ENCODE measurements at regions of chr11 and their contacts with region 1.

Region 1: DNA sequence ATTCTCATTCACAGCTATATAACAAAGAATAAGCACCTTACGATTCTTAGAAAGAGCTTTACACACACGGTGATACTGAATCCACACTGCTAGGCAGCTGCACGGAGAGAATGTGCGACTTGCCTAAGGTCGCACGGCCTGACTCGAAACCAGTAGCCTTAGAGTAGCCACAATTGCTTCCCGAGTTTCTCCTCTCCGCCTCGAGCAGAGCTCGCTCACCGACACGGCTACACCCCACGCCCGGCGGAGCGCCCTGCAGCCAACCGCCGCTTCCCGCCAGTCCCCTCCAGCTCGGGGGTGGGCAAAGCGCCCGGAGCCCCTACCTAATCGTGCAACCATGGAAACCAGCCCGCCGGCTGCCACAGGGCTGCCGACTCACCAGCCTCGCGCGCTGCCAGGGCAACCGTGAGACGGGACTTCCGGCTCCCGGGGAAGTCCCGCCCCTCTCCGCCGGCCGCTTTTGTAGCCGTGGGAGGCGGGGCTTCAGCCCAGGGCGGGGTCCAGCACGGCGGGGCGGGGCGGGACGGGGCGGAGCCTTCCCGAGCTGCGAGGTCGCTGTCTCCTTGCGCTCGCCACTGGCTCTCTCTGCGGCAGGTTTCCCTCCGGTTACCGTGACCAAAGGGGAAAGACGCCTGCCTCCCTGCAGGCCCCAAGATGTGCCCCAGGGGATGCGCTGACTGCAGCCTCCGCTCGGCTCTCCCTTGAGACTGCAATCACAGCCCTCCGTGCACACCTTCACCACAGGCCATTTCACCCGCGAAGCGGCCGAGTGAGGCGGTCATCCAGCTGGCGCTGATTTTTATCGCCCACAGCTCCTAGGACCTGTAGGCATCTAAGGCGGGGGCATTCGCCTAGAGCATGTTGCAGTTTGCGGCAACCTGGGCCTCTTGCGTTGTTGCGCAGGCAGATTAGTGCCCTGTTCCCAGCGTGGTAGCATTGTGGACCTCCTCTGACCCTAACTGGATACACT is 1.1 kb downstream of the BSCL2 start:
- DNase-seq: peak; percentile 96
- CTCF ChIP-seq: no peak

Region 2: GRCh38 chr11:62678770-62679696 is 27.1 kb before region 1 on chr11 and contains the start of gene UBXN1:
- CTCF ChIA-PET with region 1: interaction called, 17 read pairs
- POLR2A ChIA-PET with region 1: no interaction called
- DNase-seq: peak; percentile 93
- CTCF ChIP-seq: no peak

Region 3: DNA sequence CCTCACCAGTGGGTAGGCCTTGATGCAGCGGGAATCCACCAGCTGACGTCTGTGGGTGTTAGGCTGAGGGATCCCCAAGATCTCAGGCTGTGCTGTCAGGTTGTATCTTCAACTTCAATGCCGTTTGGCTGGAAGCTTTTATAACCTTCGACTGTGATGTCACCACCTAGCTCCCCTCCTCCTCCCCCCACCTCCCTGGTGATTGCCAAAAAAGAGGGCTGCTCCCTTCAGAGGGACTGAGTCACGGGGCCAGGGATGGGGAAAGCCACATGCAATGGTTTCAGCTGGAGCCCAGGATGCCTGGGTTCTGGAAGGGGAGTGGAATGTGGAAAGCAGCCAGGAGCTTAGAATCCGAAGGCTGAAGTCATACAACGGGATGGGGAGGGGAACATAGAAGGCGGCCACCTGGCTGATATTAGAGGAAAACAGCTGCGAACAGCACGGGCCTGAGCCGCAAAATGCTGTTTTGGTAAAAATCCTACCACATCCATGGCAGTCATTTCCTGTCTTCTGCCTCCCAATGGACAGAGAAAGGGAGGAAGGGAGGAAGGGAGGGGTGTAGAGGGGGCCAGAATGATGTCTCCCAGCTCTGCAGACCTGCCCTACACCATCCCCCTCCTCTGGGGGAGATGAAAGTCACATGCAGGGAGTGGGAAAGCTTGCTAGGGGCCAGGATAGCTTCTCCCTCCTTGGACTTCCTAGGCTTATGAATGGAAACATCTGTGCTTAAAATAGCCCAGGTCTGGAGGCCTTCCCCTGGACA is 16.6 kb before region 1 on chr11 and contains the start of gene LRRN4CL:
- CTCF ChIA-PET with region 1: interaction called, 79 read pairs
- POLR2A ChIA-PET with region 1: no interaction called
- DNase-seq: no peak
- CTCF ChIP-seq: no peak

Region 4: DNA sequence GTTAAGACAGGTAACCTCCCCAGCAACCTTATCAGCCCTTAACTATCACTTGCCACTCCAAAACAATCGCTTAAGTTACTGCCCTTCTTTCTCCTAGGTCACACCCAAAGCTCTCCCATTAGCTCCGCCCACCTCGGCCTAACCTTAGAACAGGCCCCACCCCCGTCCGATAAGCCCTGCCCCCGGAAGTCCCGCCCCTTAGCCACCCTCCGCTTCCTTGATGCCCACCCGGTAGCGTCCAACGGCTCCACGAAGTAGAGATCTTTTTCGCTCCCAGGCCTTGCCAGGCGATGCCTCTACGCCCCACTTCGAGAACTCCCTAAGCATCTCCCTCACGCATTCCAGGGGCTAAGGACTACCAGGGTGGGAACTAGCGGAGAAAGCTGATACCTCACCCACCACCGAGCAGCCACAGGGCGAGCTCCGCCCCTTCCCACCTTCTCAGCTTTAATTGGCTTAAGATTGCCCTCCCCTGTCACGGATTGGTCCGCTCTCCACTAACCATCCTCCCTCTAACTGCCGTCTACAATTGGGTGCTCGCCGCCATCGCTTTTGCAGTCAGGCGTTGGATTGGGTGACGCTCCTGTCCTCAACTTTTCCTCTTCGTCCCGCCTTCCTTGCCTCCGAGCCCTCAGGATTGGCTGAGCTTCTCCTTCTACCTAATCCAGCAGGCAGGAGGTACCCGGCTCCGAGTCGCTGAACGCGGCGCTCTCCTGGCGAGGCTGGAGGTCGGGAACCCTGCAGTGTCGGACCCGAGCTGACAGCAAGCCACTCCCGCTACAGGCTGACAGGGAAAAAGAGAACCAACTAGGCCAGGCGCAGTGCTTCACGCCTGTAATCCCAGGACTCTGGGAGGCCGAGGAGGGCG is 47.8 kb after region 1 on chr11 and contains the start of gene ZBTB3:
- CTCF ChIA-PET with region 1: no interaction called
- POLR2A ChIA-PET with region 1: no interaction called
- DNase-seq: peak; percentile 96
- CTCF ChIP-seq: no peak

Measured in GM10248 (cell line).